Head of caudate nucleus (tissue), 42 donors: ENCODE measurements at regions of chr3 and their contacts with region 1.

Region 1: GRCh38 chr3:141311496-141312353 is 56.6 kb upstream of the ZBTB38 start:
- DNase-seq: peak; percentile 96 to 100 (median 99)

Region 2: DNA sequence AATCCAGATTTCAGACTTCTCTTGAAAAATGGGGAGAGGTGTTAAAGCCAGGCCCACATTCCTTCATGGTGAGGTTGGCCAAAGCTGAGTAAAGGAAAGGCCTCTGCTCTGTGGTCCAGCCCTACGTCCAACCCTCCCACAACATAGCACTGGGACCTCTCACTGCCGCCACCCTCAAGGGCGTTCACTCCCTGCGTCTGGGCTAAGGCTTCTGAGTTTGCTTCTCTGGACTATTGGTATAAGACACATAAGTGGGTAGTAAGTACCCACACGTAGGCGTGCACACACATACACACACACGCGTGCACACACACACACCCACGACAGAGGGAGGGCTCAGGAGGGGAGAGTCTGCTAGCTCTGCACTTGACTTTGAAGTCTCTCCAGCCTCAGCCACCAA is 160.3 kb before region 1 on chr3:
- intact Hi-C with region 1: no loop called
- DNase-seq: no peak

Region 3: GRCh38 chr3:141360888-141361598 is 49.3 kb after region 1 on chr3:
- intact Hi-C with region 1: loop called (anchors 10 kb)
- DNase-seq: peak in 5 of 42 donors; percentile 27 to 59 (median 33)